Pancreas (tissue), 10 donors: ENCODE measurements at regions of chr5 and their contacts with region 1.

Region 1: DNA sequence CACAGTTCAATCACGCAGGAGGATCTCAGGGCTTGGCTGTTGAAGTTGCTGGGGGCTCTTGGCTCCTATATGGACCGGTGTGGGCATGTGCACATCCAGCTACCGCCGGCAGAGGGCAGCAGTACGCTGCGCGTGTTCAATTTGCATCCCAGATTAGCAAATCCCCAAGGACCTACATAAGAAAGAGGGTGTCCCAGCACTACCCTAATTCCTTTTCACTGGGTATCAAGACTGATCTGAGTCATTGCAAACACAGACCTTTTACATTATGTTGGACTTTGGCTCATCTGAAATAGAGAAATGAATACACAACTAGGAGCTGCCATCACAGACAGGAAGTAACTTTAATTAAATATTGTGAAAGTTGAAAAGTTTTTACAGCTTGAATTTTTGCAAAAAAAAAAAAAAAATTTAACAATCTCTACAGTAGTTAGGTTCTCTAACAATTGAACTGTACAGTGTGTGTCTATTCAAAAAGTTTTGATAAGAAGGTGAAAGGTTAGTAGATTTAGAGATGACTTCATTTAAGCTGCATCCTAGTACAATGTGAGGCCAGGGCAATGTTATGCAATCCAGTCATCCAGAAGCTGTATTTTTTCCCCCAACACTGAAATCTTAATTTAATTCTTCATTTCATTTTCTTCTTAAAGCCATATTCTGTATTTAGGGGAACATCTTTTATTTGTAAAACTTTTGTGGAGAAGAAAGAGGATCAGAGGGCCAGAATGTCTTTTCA is 404.0 kb downstream of the EBF1 start:
- DNase-seq: peak; percentile 37 to 88 (median 66)
- ATAC-seq: peak; percentile 60 to 94 (median 92)
- H3K4me3 ChIP-seq: no peak overlapping the region
- H3K27ac ChIP-seq: no peak overlapping the region
- H3K4me1 ChIP-seq: peaks cover 0 to 9% (median 0%) of the 10 kb centered on the region in 3 donors
- H3K27me3 ChIP-seq: peaks cover 0 to 13% (median 6%) of the 10 kb centered on the region in 4 donors
- CTCF ChIP-seq: peak; percentile 87 to 98 (median 90)

Region 2: GRCh38 chr5:159100025-159100781 is 404.4 kb after region 1 on chr5:
- intact Hi-C with region 1: loop called (anchors 5 kb)
- DNase-seq: peak; percentile 70 to 90 (median 86)
- ATAC-seq: peak; percentile 89 to 94 (median 92)
- H3K4me3 ChIP-seq: peak overlapping the region in 3 of 4 donors; percentile 16 to 43 (median 37)
- H3K27ac ChIP-seq: peak overlapping the region in 3 of 4 donors; percentile 16 to 68 (median 65)
- H3K4me1 ChIP-seq: peaks cover 0 to 4% (median 0%) of the 10 kb centered on the region in 3 donors
- H3K27me3 ChIP-seq: peaks cover 0 to 13% (median 0%) of the 10 kb centered on the region in 4 donors
- CTCF ChIP-seq: no peak